ENCODE measurements at regions of chr2 and their contacts with region 1.

Region 1: DNA sequence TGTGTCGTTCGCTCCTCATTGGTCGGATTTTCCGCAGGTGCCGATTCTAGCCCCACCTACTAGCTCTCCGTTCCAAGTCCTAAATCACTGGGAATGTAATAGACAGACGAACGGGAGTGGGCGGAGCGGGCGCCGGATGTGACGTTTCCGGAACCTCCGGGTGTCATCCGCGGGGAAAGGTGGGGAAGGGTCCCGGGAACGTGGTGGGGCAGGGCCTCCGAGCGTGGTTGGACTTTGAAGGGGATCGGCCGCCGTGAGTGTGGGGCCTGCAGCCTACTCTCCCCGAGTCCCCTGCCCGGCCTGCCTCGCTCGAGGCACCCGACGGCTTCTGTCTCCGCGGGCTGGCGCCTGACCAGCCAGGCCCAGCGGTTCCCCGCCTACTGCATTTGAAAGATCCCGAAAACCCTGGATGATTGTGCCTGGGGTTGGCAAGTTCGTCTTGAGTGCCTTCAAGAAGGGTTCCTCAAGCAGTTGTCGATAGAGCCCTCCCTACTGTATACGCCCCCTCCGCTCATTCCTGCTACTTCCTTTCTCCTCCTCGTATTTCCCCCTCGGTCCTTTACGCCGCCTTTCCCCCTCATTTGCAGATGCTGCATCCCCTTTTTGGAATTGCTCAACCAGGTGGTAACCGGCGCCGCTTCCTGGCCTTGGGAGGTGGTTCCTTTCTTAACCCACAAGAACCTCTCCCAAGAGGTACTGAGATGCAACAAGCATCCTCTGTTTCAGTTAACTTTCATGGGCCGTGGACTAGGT is at the start of gene STAMBP:
- DNase-seq: peak; percentile 95
- H3K4me3 Mint-ChIP-seq: peak within 1 kb of the TSS; percentile 96
- H3K27ac Mint-ChIP-seq: peak within 1 kb of the TSS; percentile 91
- H3K4me1 Mint-ChIP-seq: peaks cover 53% of the 10 kb centered on the region
- H3K27me3 Mint-ChIP-seq: no peaks in the 10 kb centered on the region
- total RNA-seq, gene STAMBP: 79.9 to 85.3 TPM

Region 2: GRCh38 chr2:73457982-73458381 is 371.0 kb before region 1 on chr2:
- CTCF ChIA-PET with region 1: no interaction called
- POLR2A ChIA-PET with region 1: no interaction called
- intact Hi-C with region 1: no loop called
- DNase-seq: no peak
- H3K4me3 Mint-ChIP-seq: no peak overlapping the region
- H3K27ac Mint-ChIP-seq: no peak overlapping the region
- H3K4me1 Mint-ChIP-seq: no peaks in the 10 kb centered on the region
- H3K27me3 Mint-ChIP-seq: no peaks in the 10 kb centered on the region

Region 3: GRCh38 chr2:73640511-73640911 is 188.5 kb before region 1 on chr2:
- CTCF ChIA-PET with region 1: no interaction called
- POLR2A ChIA-PET with region 1: no interaction called
- intact Hi-C with region 1: no loop called
- DNase-seq: no peak
- H3K4me3 Mint-ChIP-seq: no peak overlapping the region
- H3K27ac Mint-ChIP-seq: no peak overlapping the region
- H3K4me1 Mint-ChIP-seq: no peaks in the 10 kb centered on the region
- H3K27me3 Mint-ChIP-seq: peaks cover 12% of the 10 kb centered on the region

Region 4: DNA sequence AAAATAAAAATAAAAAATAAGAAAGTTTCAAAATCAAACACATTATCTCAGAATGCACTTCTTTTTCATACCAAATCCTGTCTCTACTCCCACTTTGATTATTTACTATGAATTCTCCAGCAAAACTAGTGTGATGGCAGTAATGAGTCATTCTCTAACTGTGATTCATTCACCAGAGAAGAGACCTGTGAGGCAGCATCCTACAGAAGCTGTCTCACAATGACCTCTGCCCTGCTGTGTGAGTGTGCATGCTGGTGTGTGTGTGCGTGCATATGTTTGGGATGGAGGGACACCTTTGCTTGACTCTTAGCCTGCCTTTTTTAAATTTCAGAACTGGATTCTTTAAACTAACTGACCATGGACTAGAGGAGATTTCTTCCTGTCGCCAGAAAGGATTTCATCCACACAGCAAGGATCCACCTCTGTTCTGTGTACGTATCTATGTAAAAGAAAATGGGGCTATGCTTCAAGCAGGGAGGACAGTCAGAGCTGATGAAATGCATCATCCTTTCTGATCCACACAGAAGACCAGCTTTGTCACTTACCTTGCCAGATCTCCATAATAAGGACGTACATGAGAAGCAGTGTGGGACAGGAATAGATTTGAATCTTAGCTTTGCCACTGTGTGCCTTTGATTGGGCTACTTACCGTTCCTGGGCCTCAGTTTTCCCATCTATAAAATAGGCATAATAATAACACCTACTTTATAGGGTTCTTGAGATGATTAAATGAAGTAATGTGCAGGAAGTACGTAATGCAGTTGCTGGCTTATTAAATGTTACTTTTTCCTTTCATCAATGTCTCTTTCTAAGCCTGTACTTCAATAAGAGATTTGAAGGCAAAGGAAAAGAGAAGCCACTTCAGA is 31.0 kb after region 1 on chr2:
- CTCF ChIA-PET with region 1: interaction called, 6 read pairs
- POLR2A ChIA-PET with region 1: no interaction called
- intact Hi-C with region 1: loop called (anchors 1 kb)
- DNase-seq: peak; percentile 76
- H3K4me3 Mint-ChIP-seq: no peak overlapping the region
- H3K27ac Mint-ChIP-seq: peak overlapping the region; percentile 59
- H3K4me1 Mint-ChIP-seq: peaks cover 33% of the 10 kb centered on the region
- H3K27me3 Mint-ChIP-seq: no peaks in the 10 kb centered on the region

Region 5: GRCh38 chr2:73926493-73927338 is 97.7 kb after region 1 on chr2 and contains the start of gene DGUOK:
- CTCF ChIA-PET with region 1: interaction called, 3 read pairs
- POLR2A ChIA-PET with region 1: interaction called, 3 read pairs
- intact Hi-C with region 1: loop called (anchors 1 kb)
- DNase-seq: peak; percentile 99
- H3K4me3 Mint-ChIP-seq: peak within 1 kb of the TSS; percentile 92
- H3K27ac Mint-ChIP-seq: peak within 1 kb of the TSS; percentile 95
- H3K4me1 Mint-ChIP-seq: peaks cover 45% of the 10 kb centered on the region
- H3K27me3 Mint-ChIP-seq: no peaks in the 10 kb centered on the region
- total RNA-seq, gene DGUOK: 101 to 102 TPM

Region 6: DNA sequence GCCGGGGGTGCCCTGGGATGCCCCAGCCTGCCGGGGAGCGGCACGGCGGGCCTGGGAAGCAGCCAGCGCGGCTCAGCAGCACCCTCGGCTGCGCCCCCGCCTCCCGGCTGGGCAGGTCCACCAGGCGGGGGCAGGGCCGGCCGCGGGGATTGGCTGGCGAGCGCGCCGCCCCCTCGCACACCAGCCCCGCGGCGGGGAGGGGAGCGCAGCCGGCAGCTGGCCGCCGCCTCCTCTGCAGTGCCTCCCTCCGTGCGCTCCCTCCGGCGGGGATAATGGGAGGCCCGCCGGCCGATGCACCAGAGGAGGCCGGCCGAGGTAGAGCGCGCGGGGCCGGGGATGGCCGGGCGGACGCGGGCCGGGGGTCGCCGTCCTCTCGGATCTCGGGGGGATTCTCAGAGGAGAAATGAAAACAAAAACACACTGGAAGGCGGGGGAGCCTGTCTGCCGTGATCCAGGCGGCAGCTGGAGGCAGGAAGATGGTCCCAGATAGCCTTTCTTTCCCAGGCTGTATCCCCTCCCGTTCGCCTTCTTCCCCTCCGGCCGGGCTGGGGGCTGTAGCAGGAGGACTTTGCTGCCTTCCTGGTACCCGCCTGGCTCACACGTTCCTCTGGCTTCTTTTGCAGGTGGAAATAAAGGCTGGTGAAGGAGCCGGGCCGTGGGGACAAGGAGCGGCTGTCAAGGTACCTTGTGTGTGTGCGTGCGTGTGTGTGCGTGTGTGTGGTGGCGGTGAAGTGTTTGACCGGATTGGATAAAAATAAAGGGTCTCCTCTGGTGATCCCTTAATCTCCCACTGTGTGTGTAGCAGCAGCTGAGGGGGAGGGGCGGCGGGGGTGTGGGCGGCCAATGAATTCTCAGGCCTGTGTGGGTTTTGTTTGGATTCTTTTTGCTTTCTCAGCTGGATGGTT is 173.7 kb after region 1 on chr2:
- CTCF ChIA-PET with region 1: interaction called, 11 read pairs
- POLR2A ChIA-PET with region 1: no interaction called
- intact Hi-C with region 1: no loop called
- DNase-seq: peak; percentile 84
- H3K4me3 Mint-ChIP-seq: peak overlapping the region; percentile 76
- H3K27ac Mint-ChIP-seq: peak overlapping the region; percentile 36
- H3K4me1 Mint-ChIP-seq: peaks cover 83% of the 10 kb centered on the region
- H3K27me3 Mint-ChIP-seq: no peaks in the 10 kb centered on the region

Region 7: DNA sequence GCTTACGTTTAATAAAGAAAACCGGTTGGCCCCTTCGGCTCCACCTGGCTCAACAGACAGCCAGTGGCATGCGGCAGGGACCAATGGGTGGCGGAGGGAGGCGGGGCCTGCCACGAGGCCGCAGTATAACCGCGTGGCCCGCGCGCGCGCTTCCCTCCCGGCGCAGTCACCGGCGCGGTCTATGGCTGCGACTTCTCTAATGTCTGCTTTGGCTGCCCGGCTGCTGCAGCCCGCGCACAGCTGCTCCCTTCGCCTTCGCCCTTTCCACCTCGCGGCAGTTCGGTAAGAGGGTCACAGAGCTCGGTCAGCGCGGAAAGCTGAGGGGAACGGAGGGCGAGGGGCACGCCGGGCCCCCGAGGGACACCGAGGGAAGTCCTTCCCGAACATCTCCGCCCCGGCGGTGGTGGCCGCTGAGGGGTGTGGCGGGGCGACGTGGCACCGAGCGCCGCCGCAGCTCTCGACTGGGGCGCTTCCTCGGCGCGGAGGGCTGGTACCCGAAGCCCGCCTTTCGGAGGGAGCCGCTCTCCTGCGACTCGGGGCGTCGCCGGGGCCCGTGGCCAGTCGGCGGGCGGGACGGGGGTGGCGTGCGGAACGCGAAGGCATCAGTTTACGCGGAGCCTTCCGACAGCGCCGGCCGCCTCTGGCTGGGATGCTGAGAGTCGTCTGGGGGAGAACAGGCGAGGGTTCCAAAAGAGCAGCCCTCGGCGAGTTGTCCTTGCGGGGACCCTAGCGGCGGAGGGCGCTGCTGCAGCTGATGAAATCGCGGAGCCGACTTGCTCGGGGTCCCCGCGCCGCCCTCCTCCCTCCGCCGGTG is 369.7 kb after region 1 on chr2 and contains the start of gene MTHFD2:
- CTCF ChIA-PET with region 1: interaction called, 5 read pairs
- POLR2A ChIA-PET with region 1: interaction called, 3 read pairs
- intact Hi-C with region 1: loop called (anchors 1 kb)
- DNase-seq: peak; percentile 95
- H3K4me3 Mint-ChIP-seq: peak within 1 kb of the TSS; percentile 99
- H3K27ac Mint-ChIP-seq: peak within 1 kb of the TSS; percentile 100
- H3K4me1 Mint-ChIP-seq: peaks cover 39% of the 10 kb centered on the region
- H3K27me3 Mint-ChIP-seq: peaks cover 2% of the 10 kb centered on the region
- total RNA-seq, gene MTHFD2: 518 to 525 TPM

Region 8: GRCh38 chr2:74458132-74458925 is 629.3 kb after region 1 on chr2 and contains the start of gene WBP1:
- CTCF ChIA-PET with region 1: no interaction called
- POLR2A ChIA-PET with region 1: no interaction called
- intact Hi-C with region 1: loop called (anchors 1 kb)
- DNase-seq: peak; percentile 100
- H3K4me3 Mint-ChIP-seq: peak within 1 kb of the TSS; percentile 87
- H3K27ac Mint-ChIP-seq: peak within 1 kb of the TSS; percentile 99
- H3K4me1 Mint-ChIP-seq: peaks cover 55% of the 10 kb centered on the region
- H3K27me3 Mint-ChIP-seq: peaks cover 2% of the 10 kb centered on the region
- total RNA-seq, gene WBP1: 32.9 to 35.9 TPM